WTC11 (cell line): ENCODE measurements at regions of chr20 and their contacts with region 1.

Region 1: DNA sequence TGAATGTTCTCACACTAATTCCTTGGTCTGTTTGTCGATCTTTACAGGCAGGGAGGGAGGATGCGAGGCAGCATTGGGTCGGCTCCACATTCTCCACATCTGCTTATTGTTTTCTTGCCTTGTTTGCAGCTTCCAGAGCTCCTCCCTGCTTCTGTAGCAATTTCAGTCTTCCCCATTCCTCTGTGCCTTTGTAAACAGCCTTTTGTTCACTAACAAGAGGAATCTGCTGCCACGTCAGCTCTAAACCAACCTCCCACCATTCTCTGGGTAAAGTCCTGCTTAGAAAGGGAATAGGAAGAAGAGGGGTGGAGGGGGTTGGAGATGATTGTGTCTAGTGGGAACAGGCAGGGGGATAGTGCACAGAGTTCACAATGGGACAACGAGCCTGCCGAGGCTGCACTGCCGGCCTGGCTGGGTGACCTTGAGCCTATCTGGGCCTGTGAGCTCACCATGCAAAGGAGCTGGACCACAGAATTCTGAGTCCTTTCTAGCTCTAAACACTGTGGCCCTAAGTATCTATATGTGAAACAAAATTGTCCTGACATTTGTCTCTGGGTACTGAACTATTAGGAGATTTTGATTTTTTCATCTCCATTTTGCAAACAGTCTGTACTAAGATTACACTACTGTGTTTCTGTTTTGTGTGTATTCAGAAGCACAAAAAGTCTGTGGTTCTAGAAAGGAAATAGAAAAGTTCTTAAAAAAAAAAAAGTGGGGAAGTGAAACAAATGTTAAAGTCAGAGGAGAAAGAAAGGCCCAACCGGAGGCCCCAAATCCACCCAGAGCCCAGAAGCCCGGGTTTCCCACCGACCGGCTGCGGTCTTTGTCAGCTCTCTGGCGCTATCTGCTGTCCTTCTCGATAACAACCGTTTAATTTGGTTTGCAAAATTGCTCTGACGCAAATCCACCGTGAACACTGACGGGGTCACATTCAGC is 1.4 kb upstream of the PRND start:
- DNase-seq: peak; percentile 75
- ATAC-seq: peak; percentile 78
- H3K4me3 Mint-ChIP-seq: 0 out of 2 replicates have a peak overlapping the region, but pooled peaks have one; percentile 4
- H3K27ac Mint-ChIP-seq: peak overlapping the region; percentile 90
- H3K4me1 Mint-ChIP-seq: peaks cover 20% of the 10 kb centered on the region
- H3K27me3 Mint-ChIP-seq: no peaks in the 10 kb centered on the region
- CTCF ChIP-seq: peak; percentile 48

Region 2: GRCh38 chr20:4607287-4607713 is 113.0 kb before region 1 on chr20:
- CTCF ChIA-PET with region 1: interaction called, 16 read pairs
- POLR2A ChIA-PET with region 1: no interaction called
- DNase-seq: peak; percentile 64
- ATAC-seq: peak; percentile 88
- H3K4me3 Mint-ChIP-seq: no peak overlapping the region
- H3K27ac Mint-ChIP-seq: no peak overlapping the region
- H3K4me1 Mint-ChIP-seq: peaks cover 3% of the 10 kb centered on the region
- H3K27me3 Mint-ChIP-seq: no peaks in the 10 kb centered on the region
- CTCF ChIP-seq: peak; percentile 92

Region 3: DNA sequence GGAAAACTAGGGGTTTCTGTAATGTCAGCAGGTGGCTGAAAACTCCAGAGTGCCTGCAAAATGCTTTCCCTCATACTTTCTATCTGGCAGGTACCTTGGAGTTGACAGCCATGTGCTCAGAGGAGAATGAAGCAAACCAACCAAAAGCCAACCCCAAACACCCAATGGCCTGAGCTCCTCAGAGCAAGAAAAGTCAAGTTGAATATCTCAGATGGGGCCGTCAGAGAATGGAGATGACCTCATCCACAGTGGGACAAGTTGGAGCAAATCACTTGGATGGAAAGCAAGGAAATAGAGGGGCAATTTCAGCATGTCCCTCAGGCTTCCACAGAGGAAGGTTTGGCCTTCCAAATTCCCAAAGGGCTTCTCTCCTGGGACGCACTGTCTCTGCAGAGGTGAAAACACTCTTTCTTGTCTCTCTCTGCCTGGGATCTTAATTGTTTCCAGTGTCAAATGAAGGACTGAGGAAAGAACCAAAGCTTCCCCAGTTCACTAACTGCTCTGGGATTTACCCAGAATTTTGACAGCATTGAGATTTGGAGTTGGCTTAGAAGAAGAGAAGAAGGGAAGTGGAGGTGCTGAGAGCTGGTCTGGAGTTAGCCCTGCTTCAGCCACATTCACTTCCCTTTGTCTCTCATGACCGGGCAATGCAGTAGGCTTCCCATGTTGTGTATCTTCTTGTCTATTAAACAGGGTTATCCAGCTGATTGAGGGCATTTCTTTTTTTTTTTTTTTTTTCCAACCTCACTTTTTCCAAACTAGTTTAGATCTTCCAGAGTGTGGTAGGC is 43.6 kb after region 1 on chr20:
- CTCF ChIA-PET with region 1: interaction called, 10 read pairs
- POLR2A ChIA-PET with region 1: no interaction called
- DNase-seq: no peak
- ATAC-seq: no peak
- H3K4me3 Mint-ChIP-seq: no peak overlapping the region
- H3K27ac Mint-ChIP-seq: no peak overlapping the region
- H3K4me1 Mint-ChIP-seq: peaks cover 6% of the 10 kb centered on the region
- H3K27me3 Mint-ChIP-seq: peaks cover 13% of the 10 kb centered on the region
- CTCF ChIP-seq: no peak